GM18951 (cell line): ENCODE measurements at regions of chr3 and their contacts with region 1.

Region 1: DNA sequence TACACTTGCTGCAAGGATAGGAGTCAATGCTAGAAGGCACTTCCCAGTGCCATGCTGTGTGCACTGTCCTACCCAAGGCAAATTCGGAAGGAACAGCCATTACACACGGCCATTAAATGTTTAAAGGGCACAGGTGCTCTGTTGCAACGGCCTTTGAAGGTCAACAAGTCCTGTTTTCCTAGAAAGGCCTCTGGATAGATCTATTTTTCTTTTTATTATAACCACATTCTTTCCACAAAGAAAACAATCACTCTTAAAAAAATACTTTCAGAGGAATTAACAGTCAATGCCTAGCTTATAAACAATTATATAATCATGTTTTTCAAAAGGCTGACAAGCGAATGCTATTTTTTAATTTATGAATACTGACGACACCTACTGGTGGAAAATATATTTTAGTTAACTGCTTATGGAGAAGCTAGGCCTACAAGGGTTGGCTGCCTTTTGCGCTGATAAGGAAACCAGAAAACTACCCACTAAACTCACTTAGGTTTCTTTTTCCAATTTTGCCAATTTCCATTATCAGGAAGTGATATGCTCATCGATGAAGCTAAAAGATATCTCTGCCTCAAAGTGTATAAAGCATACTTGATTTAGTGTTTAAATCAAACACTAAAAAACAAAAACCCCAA is 2.4 kb downstream of the ARHGEF3 start:
- POLR2A ChIP-seq: no peak

Region 2: DNA sequence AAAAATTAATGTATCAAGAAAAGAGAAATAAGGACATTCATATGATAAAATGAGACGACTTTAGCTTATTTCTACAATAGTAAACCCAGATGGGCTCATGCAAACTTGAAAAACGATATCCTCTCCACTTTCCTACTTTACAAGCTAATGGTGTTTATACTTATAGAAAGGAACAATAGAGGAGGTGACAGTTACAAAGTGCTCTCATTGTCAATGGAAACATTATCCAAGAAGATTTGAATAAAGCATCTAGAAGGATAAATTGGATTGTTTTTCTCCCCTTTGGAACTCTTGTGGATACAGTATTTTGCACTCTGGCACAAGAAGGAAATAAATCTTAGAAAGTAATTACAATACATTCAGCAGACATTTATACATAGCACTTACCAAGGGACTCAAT is 262.6 kb before region 1 on chr3:
- in situ Hi-C with region 1: no loop called
- POLR2A ChIP-seq: no peak

Region 3: GRCh38 chr3:56711344-56711743 is 88.0 kb before region 1 on chr3:
- in situ Hi-C with region 1: loop called (anchors 5 kb)
- POLR2A ChIP-seq: no peak